Activated B cell treated with CpG ODN at 0.5 μM for 24 hours (primary cell): ENCODE measurements at regions of chr16 and their contacts with region 1.

Region 1: DNA sequence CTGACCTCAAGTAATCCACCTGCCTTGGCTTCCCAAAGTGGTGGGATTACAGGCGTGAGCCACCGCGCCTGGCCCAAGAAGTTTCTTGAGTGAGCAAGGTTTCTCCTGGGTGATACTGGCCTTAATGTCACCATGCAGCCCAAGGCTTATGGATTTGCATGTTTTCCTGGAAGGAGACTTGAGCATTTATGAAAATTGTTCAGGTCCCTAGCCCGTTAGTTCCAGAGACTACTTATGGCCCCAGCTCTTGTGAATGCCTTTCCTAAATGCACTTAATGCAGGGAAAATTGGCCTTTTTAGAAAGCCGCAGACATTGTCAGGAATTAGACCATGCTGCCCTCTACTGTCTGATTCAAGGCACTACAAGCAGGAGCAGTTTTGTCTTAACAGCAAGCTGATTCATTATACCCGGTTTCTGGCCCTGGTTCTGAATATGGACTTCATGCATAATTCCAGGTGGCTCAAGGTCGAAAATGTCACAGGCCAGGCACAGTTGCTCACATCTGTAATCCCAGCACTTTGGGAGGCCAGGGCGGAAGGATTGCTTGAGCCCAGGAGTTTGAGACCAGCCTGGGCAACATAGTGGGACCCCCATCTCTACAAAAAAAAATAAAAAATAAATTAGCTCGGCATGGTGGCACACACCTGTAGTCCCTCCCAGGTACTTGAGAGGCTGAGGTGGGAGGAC is 91.3 kb downstream of the SNX29 start:
- DNase-seq: no peak
- ATAC-seq: peak; percentile 87
- H3K4me3 Mint-ChIP-seq: no peak overlapping the region
- H3K27ac Mint-ChIP-seq: peak overlapping the region; percentile 50
- H3K4me1 Mint-ChIP-seq: peaks cover 17% of the 10 kb centered on the region
- H3K27me3 Mint-ChIP-seq: no peaks in the 10 kb centered on the region
- CTCF ChIP-seq: peak; percentile 78

Region 2: GRCh38 chr16:11783319-11784037 is 284.4 kb before region 1 on chr16:
- CTCF ChIA-PET with region 1: no interaction called
- POLR2A ChIA-PET with region 1: no interaction called
- intact Hi-C with region 1: no loop called
- DNase-seq: peak; percentile 32
- ATAC-seq: peak; percentile 76
- H3K4me3 Mint-ChIP-seq: peak overlapping the region; percentile 80
- H3K27ac Mint-ChIP-seq: peak overlapping the region; percentile 98
- H3K4me1 Mint-ChIP-seq: peaks cover 73% of the 10 kb centered on the region
- H3K27me3 Mint-ChIP-seq: no peaks in the 10 kb centered on the region
- CTCF ChIP-seq: no peak

Region 3: DNA sequence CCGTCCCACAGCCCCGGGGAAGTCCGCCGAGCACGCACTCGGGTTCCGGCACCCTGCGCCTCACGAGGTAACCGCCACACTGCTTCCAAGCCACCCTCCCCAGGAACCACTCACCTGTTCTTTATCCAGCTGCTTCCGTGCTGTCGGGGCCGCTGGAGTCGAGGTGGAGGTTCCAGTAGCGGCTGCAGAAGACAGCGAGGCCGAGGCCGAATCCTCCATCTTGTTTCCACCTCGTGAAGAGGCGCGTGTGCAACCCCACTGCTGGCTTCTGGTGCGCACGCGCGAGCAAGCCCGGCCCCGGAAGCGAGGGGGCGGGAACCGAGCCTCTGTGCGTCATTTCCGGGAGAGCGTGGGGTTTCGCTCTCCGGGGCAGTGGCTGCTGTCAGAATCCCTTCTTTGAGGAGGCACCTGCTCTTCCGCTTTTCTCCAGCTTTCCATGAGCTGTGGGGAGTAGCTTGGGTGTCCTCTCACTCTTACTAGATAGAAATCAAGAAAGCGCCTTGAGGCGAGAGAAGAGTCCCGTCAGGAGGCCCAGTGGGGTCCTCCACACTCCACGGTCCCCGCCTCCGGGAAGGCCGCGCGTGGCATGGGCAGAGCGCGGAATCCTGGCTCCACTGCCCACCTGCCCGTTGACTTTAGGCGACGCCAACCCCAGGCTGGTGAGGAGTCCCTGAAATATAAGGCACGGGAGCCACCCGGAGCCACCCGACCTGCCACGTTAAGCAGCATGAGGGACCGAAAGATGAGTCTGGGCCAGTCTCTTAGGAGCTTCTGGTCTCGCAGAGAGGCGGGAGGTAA is 216.4 kb before region 1 on chr16 and contains the start of gene RSL1D1:
- CTCF ChIA-PET with region 1: no interaction called
- POLR2A ChIA-PET with region 1: no interaction called
- intact Hi-C with region 1: loop called (anchors 10 kb)
- DNase-seq: peak; percentile 98
- ATAC-seq: peak; percentile 78
- H3K4me3 Mint-ChIP-seq: peak within 1 kb of the TSS; percentile 98
- H3K27ac Mint-ChIP-seq: peak within 1 kb of the TSS; percentile 91
- H3K4me1 Mint-ChIP-seq: peaks cover 51% of the 10 kb centered on the region
- H3K27me3 Mint-ChIP-seq: no peaks in the 10 kb centered on the region
- CTCF ChIP-seq: no peak
- total RNA-seq, gene RSL1D1: 224 and 265 TPM in 2 replicates

Region 4: DNA sequence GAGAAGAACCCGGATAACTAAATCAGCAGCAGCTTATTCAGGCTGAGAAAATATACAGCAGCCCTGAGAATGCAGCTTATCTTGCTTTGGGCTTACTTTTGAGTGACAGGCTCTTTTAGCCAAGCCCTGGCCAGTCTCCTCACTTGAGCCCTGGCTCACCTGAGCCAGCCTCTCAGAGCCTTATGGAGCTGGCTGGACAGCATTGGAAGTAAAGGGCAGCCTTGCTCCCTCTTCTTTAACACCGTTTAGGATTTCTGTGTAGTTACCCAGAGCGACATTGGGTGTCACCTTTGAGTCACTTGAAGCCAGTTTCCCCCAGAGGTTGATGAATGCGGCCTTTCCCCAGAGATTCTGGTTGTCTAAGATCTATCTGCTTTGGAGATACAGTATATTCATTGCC is 118.3 kb before region 1 on chr16:
- CTCF ChIA-PET with region 1: interaction called, 142 read pairs
- POLR2A ChIA-PET with region 1: interaction called, 11 read pairs
- intact Hi-C with region 1: loop called (anchors 1 kb)
- DNase-seq: no peak
- ATAC-seq: peak; percentile 99
- H3K4me3 Mint-ChIP-seq: no peak overlapping the region
- H3K27ac Mint-ChIP-seq: no peak overlapping the region
- H3K4me1 Mint-ChIP-seq: peaks cover 14% of the 10 kb centered on the region
- H3K27me3 Mint-ChIP-seq: no peaks in the 10 kb centered on the region
- CTCF ChIP-seq: peak; percentile 38

Region 5: GRCh38 chr16:11964761-11965551 is 102.9 kb before region 1 on chr16 and contains the start of gene TNFRSF17:
- CTCF ChIA-PET with region 1: interaction called, 13 read pairs
- POLR2A ChIA-PET with region 1: interaction called, 3 read pairs
- intact Hi-C with region 1: loop called (anchors 5 kb)
- DNase-seq: no peak
- ATAC-seq: peak; percentile 64
- H3K4me3 Mint-ChIP-seq: peak within 1 kb of the TSS; percentile 80
- H3K27ac Mint-ChIP-seq: peak within 1 kb of the TSS; percentile 90
- H3K4me1 Mint-ChIP-seq: peaks cover 72% of the 10 kb centered on the region
- H3K27me3 Mint-ChIP-seq: no peaks in the 10 kb centered on the region
- CTCF ChIP-seq: no peak
- total RNA-seq, gene TNFRSF17: 6.9 and 8.0 TPM in 2 replicates

Region 6: GRCh38 chr16:12026741-12027490 is 40.9 kb before region 1 on chr16:
- CTCF ChIA-PET with region 1: no interaction called
- POLR2A ChIA-PET with region 1: no interaction called
- intact Hi-C with region 1: loop called (anchors 5 kb)
- DNase-seq: no peak
- ATAC-seq: no peak
- H3K4me3 Mint-ChIP-seq: no peak overlapping the region
- H3K27ac Mint-ChIP-seq: peak overlapping the region; percentile 57
- H3K4me1 Mint-ChIP-seq: peaks cover 71% of the 10 kb centered on the region
- H3K27me3 Mint-ChIP-seq: no peaks in the 10 kb centered on the region
- CTCF ChIP-seq: no peak

Region 7: GRCh38 chr16:12079412-12079965 is 11.6 kb after region 1 on chr16:
- CTCF ChIA-PET with region 1: interaction called, 17 read pairs
- POLR2A ChIA-PET with region 1: no interaction called
- intact Hi-C with region 1: no loop called
- DNase-seq: no peak
- ATAC-seq: no peak
- H3K4me3 Mint-ChIP-seq: no peak overlapping the region
- H3K27ac Mint-ChIP-seq: peak overlapping the region; percentile 88
- H3K4me1 Mint-ChIP-seq: peaks cover 58% of the 10 kb centered on the region
- H3K27me3 Mint-ChIP-seq: no peaks in the 10 kb centered on the region
- CTCF ChIP-seq: no peak

Region 8: GRCh38 chr16:12095275-12096156 is 27.7 kb after region 1 on chr16:
- CTCF ChIA-PET with region 1: interaction called, 11 read pairs
- POLR2A ChIA-PET with region 1: no interaction called
- intact Hi-C with region 1: no loop called
- DNase-seq: peak; percentile 50
- ATAC-seq: no peak
- H3K4me3 Mint-ChIP-seq: peak overlapping the region; percentile 44
- H3K27ac Mint-ChIP-seq: no peak overlapping the region
- H3K4me1 Mint-ChIP-seq: peaks cover 26% of the 10 kb centered on the region
- H3K27me3 Mint-ChIP-seq: no peaks in the 10 kb centered on the region
- CTCF ChIP-seq: peak; percentile 52